ENCODE measurements at regions of chr13 and their contacts with region 1.

Region 1: DNA sequence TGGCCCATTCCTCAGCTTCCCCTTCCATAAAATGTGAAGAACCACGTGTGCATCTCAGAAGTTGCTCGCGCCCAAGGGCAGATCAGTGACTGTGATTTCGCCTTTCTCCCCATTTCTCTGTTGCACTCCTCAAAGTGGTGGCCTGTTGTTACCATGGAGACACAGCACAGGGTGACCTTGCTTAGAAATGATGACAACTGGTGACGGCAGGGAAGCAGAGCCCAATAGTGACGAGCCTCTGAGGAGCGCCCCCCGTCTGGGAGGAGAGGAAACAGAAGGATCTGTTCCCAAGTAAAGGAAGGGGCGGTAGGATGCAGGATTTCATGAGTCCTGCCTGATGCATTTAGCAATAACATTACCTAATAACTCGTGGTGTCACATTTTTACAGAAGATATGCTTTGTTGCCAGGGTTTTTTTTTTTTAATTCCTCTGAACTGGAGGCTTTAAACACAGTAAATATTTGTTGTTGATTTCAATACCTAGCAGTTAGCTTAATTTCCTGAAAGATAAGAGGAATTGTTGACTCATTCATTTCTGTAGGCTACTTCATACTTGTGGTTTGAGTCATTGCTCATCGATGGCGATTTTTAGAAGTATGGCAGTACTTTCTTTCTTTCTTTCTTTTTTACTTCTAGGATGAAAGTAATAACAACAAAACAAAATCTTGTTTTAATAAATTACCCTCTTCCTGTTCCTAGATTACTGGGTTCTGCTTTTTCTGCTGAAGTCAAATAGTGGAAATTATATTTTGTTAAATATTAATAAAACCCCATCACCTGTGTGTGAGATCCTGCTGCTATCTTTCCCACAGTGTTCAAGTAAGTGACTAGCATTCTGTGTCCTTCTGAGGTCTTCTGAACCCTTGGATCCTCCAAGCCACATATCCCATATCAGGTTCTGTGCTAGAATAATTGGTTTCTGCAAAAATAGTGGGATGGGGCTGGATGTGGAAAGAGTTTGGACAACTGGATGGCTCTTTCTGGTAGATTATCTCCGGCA is 36.0 kb downstream of the MBNL2 start:
- DNase-seq: no peak

Region 2: GRCh38 chr13:97273341-97273831 is 15.3 kb after region 1 on chr13:
- intact Hi-C with region 1: loop called (anchors 2 kb)
- DNase-seq: no peak

Region 3: DNA sequence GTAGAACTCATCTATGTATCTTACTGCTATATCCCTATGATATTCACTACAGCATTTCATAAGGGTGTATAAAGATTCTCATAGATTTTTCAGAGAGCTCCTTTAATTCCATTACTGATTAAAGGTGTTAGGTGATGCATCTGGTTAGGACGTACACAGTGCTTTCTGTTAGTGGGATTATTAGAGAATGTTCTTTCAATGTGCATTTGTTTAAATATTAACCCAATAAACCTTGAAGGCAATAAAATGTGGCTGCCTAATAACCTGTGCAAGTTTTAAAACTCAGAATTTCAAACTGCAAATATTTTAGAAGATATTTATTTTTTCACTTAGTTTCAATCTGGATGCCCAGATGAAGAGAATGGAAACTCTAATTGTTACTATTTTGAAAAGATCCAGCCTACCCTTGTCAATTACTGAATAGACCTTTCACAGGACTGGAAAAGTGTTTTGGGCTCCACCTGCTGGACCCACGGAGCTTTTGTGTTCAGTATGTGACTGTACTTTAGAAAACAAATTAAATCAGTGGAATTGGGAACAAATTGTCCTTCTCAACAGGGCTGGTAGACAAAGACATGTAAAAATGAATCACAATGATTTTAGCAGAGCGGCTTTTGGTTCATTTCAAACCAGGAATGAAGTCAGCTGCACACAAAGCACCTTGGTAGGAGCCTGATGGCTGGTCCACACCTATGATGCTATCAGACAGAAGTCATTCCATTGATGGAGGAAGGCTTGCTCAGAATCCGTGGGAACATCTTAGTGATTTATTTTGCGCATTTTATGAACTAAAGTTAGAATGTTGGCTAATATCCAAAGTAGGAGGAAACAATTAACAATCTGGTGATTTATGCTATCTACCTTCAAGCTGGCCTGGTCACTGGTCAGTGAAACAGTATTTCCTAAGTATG is 86.4 kb after region 1 on chr13:
- intact Hi-C with region 1: loop called (anchors 5 kb)
- DNase-seq: no peak